Mammary epithelial cell (primary cell): ENCODE measurements at regions of chr7 and their contacts with region 1.

Region 1: GRCh38 chr7:143380255-143380645 is 895 bp upstream of the ZYX start:
- DNase-seq: peak; percentile 73
- H3K4me3 ChIP-seq: peak overlapping the region; percentile 67 to 85 (median 84)
- H3K27ac ChIP-seq: peak overlapping the region; percentile 77
- H3K4me1 ChIP-seq: peaks cover 51% of the 10 kb centered on the region
- H3K27me3 ChIP-seq: no peaks in the 10 kb centered on the region
- CTCF ChIP-seq: peak; percentile 74 to 82

Region 2: DNA sequence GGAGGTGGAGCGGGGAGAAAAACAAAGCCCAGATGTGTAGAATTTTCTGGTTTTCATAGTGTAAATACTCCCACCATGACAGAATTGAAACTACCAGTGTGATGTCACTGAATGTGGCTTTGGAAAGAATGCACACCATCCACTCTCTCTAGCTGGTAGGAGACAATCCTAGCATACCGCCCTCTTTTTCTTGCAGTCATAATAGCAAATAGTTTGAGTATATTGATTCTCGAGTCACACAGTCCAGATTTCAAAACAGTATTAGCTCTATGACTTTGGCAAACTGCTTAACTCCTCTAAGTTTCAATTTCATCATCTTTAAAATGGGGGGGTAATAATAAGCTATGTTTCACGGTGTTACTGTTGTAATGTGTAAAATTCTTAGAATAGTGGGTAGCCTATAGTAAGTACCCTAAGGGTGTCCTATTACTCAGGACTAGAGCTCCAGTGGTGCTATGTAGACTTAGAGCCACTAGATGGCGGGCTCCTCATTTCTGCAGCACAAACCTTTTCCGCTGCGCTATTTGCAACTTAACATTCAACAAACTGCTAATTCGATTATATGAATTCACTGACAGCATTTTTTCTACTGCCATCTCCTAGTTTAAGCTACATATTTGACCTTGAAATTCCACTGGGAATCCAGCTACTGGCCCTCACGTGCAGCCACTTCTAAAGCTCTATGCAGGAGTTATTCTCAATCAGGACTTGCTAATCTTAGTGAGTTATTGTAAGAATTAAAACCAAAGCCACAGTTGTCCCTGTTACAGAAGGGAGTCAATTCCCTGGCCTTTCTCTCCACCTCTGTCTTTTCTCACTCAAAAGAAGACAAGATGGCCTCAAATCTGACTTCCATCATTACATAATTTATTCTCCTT is 139.7 kb before region 1 on chr7:
- CTCF ChIA-PET with region 1: no interaction called
- dilution Hi-C with region 1: no loop called
- in situ Hi-C with region 1: no loop called
- intact Hi-C with region 1: loop called (anchors 1 kb)
- DNase-seq: peak; percentile 58
- H3K4me3 ChIP-seq: no peak overlapping the region
- H3K27ac ChIP-seq: no peak overlapping the region
- H3K4me1 ChIP-seq: peaks cover 13% of the 10 kb centered on the region
- H3K27me3 ChIP-seq: no peaks in the 10 kb centered on the region
- CTCF ChIP-seq: peak; percentile 92 to 95

Region 3: DNA sequence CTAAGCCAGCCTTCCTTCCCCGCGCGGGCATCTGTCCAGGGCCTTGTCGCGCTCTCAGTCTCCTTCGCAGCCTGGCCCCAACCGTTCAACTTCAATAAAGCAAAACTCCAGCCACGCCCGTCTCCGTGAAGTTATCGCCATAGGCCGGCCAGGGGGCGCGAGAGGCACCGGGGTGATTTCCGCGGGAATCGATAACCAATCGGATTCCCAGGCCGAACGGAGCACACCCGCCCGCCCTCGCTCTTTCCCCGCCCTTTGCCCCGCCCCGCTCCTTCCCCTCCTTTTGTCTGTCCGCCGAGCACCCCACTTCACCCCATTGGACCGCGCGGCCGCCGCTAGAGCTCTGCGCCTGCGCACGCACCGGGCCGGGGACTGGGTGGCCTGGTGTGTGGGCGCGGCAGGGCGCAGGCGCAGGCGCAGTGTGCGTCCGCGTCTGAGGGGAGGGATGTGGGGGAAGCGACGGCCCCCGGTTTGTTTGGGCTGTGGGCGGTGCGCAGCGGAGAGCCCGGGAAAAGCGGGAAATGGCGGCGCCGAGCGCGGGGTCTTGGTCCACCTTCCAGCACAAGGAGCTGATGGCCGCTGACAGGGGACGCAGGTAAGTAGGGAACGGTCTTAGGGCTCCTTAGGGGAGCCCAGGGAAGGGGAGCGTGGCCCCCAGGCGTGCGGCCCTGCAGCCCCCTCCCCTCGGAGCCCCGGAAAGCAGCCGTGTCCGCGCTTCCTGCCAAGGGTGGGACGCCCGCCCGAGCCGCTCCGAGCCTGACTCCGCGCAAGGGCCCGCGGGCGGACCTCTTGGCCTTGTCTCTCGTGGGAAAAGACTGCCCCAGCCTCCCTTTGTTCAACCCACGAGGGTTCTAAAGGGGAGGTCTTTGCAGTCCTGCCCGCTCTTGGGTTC is 92.1 kb before region 1 on chr7 and contains the start of gene CASP2:
- CTCF ChIA-PET with region 1: no interaction called
- dilution Hi-C with region 1: no loop called
- in situ Hi-C with region 1: no loop called
- intact Hi-C with region 1: loop called (anchors 2 kb)
- DNase-seq: peak; percentile 97
- H3K4me3 ChIP-seq: peak within 1 kb of the TSS; percentile 64 to 87 (median 78)
- H3K27ac ChIP-seq: peak within 1 kb of the TSS; percentile 86
- H3K4me1 ChIP-seq: peaks cover 41% of the 10 kb centered on the region
- H3K27me3 ChIP-seq: no peaks in the 10 kb centered on the region
- CTCF ChIP-seq: peak in 1 of 2 donors; percentile 34
- total RNA-seq, gene CASP2: 18.3 to 43.5 TPM

Region 4: DNA sequence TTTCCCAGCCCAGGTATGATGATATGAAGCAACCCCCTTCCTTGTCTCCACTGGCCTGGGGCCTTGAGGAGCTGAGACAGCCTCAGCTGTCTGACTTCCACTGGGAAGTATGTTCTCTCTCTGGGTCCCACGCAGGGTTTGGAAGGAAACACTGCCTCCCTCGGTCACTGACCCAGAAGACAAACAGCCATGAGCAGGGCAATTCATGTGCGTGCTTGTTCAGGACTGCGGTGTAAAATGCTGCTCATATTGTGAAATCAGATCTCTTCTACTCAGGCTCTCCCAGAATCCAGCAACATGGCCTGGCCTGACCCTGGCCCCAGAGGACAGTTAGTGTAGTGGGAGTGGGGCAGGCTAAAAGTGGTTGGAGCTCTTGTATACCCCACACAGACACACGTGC is 61.6 kb before region 1 on chr7:
- CTCF ChIA-PET with region 1: interaction called, 5 read pairs
- dilution Hi-C with region 1: no loop called
- in situ Hi-C with region 1: no loop called
- intact Hi-C with region 1: loop called (anchors 2 kb)
- DNase-seq: peak; percentile 90
- H3K4me3 ChIP-seq: no peak overlapping the region
- H3K27ac ChIP-seq: no peak overlapping the region
- H3K4me1 ChIP-seq: peaks cover 15% of the 10 kb centered on the region
- H3K27me3 ChIP-seq: no peaks in the 10 kb centered on the region
- CTCF ChIP-seq: peak; percentile 30 to 45

Region 5: DNA sequence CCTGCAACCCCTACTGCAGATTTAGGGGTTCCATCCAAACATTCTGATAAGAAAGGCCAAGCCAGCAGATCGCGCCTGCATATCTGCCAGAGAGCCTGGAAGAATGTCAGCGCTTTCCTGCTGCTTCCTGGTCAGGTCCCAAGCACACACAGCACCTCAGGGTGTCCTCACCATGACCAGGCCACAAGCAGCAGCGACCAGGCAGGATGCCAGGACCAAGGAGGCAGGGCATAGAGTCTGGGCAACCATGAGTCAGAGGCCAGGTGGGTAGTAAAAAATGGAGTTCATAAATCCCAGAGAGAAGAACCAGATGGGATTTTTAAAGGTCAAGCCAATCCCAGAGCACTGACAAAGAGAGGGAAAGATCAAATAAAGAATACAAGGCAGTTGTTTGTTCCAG is 12.3 kb before region 1 on chr7:
- CTCF ChIA-PET with region 1: no interaction called
- dilution Hi-C with region 1: no loop called
- in situ Hi-C with region 1: no loop called
- intact Hi-C with region 1: no loop called
- DNase-seq: peak; percentile 77
- H3K4me3 ChIP-seq: no peak overlapping the region
- H3K27ac ChIP-seq: no peak overlapping the region
- H3K4me1 ChIP-seq: peaks cover 20% of the 10 kb centered on the region
- H3K27me3 ChIP-seq: peaks cover 11% of the 10 kb centered on the region
- CTCF ChIP-seq: no peak

Region 6: GRCh38 chr7:143408686-143409561 is 28.7 kb after region 1 on chr7 and contains the start of gene EPHA1:
- CTCF ChIA-PET with region 1: no interaction called
- dilution Hi-C with region 1: no loop called
- in situ Hi-C with region 1: no loop called
- intact Hi-C with region 1: loop called (anchors 2 kb)
- DNase-seq: peak; percentile 82
- H3K4me3 ChIP-seq: peak within 1 kb of the TSS; percentile 56 to 82 (median 79)
- H3K27ac ChIP-seq: peak within 1 kb of the TSS; percentile 32
- H3K4me1 ChIP-seq: peaks cover 27% of the 10 kb centered on the region
- H3K27me3 ChIP-seq: no peaks in the 10 kb centered on the region
- CTCF ChIP-seq: peak; percentile 45 to 66
- total RNA-seq, gene EPHA1: 15.2 to 27.3 TPM

Region 7: GRCh38 chr7:143416565-143417149 is 36.4 kb after region 1 on chr7:
- CTCF ChIA-PET with region 1: no interaction called
- dilution Hi-C with region 1: no loop called
- in situ Hi-C with region 1: no loop called
- intact Hi-C with region 1: loop called (anchors 1 kb)
- DNase-seq: no peak
- H3K4me3 ChIP-seq: peak overlapping the region in 2 of 3 experiments; percentile 33 to 38
- H3K27ac ChIP-seq: peak overlapping the region; percentile 89
- H3K4me1 ChIP-seq: peaks cover 33% of the 10 kb centered on the region
- H3K27me3 ChIP-seq: no peaks in the 10 kb centered on the region
- CTCF ChIP-seq: peak; percentile 61 to 70

Region 8: DNA sequence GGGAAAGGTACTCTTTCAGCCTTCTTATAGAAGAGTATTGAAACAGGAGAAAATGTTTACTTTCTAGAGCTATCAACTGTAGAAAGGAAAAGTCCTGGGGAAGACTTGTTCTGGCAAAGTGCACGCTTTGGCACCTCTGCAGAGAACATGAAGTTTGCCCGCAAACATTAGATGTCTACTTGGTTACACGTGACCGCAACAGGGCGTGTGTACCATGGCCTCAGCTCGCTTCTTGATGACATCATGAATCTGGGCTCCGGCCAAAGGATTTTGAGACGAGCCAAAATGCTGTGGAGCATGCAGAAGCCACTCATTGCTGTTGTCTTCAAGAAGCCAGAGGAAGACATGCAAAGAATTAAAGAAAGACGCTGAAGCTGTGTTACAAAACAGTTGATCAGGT is 54.4 kb after region 1 on chr7:
- CTCF ChIA-PET with region 1: no interaction called
- dilution Hi-C with region 1: no loop called
- in situ Hi-C with region 1: no loop called
- intact Hi-C with region 1: no loop called
- DNase-seq: peak; percentile 54
- H3K4me3 ChIP-seq: no peak overlapping the region
- H3K27ac ChIP-seq: no peak overlapping the region
- H3K4me1 ChIP-seq: peaks cover 16% of the 10 kb centered on the region
- H3K27me3 ChIP-seq: no peaks in the 10 kb centered on the region
- CTCF ChIP-seq: no peak

Region 9: GRCh38 chr7:143490717-143491306 is 110.6 kb after region 1 on chr7:
- CTCF ChIA-PET with region 1: interaction called, 12 read pairs
- dilution Hi-C with region 1: no loop called
- in situ Hi-C with region 1: no loop called
- intact Hi-C with region 1: no loop called
- DNase-seq: no peak
- H3K4me3 ChIP-seq: no peak overlapping the region
- H3K27ac ChIP-seq: no peak overlapping the region
- H3K4me1 ChIP-seq: no peaks in the 10 kb centered on the region
- H3K27me3 ChIP-seq: no peaks in the 10 kb centered on the region
- CTCF ChIP-seq: peak; percentile 47 to 83